ENCODE measurements at regions of chr1 and their contacts with region 1.

Region 1: DNA sequence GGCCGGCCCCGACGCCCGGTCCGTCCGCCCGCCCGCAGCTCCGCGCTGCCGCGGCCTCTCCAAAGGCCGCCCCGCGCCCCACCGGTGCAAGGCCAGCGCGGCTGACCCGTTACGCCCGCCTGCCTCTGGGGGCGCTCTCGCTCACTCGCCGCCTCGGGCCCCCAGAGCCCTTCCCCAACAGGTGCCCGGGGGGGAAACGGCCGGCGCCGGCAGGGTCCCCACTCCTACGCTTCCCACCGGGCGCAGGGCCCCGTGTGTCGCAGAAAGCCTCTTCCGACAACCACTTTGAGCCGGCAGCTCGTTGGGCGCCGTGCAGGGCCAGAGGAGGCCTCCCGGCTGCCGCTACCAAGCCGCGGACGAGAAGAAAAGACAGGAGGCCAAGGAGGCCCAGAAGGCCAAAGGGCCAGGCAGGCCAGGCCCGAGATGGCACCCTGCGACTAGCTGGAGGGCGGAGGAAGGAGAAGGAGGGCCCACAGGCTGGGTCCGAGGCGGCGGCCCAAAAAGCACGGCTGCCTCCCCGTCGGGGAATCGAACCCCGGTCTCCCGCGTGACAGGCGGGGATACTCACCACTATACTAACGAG is 64.9 kb upstream of the FCGR2A start:
- DNase-seq: peak; percentile 60 to 74 (median 67)
- H3K4me3 ChIP-seq: peak overlapping the region; percentile 38 to 83 (median 72)
- H3K27ac ChIP-seq: no peak overlapping the region
- H3K4me1 ChIP-seq: peaks cover 0 to 11% (median 6%) of the 10 kb centered on the region in 4 experiments
- H3K27me3 ChIP-seq: peaks cover 12 to 44% (median 25%) of the 10 kb centered on the region in 5 experiments

Region 2: DNA sequence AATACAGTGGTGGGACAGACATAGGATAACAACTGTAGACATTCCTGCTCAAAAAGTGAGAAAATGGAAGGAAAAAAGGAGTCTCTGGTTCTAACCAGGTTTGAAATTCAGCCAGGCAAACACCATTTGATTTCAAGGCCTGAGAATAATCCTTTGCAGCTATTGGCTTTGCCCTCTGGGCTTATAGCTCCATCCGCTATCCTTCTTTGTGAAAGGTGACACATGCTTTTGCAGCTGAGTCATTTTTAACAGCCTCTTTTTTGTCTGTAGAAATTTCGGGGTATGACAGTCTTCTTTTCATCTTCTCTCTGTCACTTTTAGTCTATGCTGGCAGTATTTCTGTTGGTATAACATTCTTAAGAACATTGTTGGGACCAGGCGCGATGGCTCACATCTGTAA is 110.1 kb before region 1 on chr1:
- CTCF ChIA-PET with region 1: no interaction called
- POLR2A ChIA-PET with region 1: no interaction called
- DNase-seq: no peak
- H3K4me3 ChIP-seq: no peak overlapping the region
- H3K27ac ChIP-seq: no peak overlapping the region
- H3K4me1 ChIP-seq: no peaks in the 10 kb centered on the region
- H3K27me3 ChIP-seq: no peaks in the 10 kb centered on the region

Region 3: DNA sequence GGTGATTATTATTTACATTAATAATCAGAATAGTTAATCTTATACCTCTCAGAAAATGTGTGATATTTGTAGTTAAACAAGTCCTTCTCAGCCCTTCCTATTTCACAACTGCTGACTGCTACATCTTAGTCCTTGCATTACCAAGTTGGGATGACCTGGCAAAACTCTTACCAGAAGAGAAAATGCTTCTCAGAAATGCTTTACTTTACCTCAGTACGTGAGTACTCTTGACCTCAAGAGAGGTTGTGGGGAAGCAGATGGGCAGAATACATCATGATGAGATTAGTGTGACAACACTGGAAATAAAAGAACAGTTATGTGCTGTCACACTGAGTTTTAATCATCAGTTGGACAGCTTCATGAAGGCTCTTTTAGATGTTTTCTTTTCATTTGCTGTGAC is 88.9 kb before region 1 on chr1:
- CTCF ChIA-PET with region 1: no interaction called
- POLR2A ChIA-PET with region 1: no interaction called
- DNase-seq: peak in 2 of 3 donors; percentile 52
- H3K4me3 ChIP-seq: no peak overlapping the region
- H3K27ac ChIP-seq: no peak overlapping the region
- H3K4me1 ChIP-seq: peaks cover 0 to 14% (median 0%) of the 10 kb centered on the region in 4 experiments
- H3K27me3 ChIP-seq: no peaks in the 10 kb centered on the region

Region 4: GRCh38 chr1:161374373-161374772 is 66.0 kb before region 1 on chr1:
- CTCF ChIA-PET with region 1: no interaction called
- POLR2A ChIA-PET with region 1: no interaction called
- DNase-seq: peak; percentile 33 to 51 (median 49)
- H3K4me3 ChIP-seq: no peak overlapping the region
- H3K27ac ChIP-seq: no peak overlapping the region
- H3K4me1 ChIP-seq: peaks cover 0 to 4% (median 0%) of the 10 kb centered on the region in 4 experiments
- H3K27me3 ChIP-seq: no peaks in the 10 kb centered on the region

Region 5: GRCh38 chr1:161399257-161399998 is 41.0 kb before region 1 on chr1:
- CTCF ChIA-PET with region 1: interaction called, 14 read pairs
- POLR2A ChIA-PET with region 1: no interaction called
- DNase-seq: peak; percentile 90 to 94 (median 93)
- H3K4me3 ChIP-seq: peak overlapping the region; percentile 76 to 100 (median 89)
- H3K27ac ChIP-seq: peak overlapping the region; percentile 98 to 99
- H3K4me1 ChIP-seq: peaks cover 3 to 15% (median 9%) of the 10 kb centered on the region in 4 experiments
- H3K27me3 ChIP-seq: peaks cover 0 to 6% (median 0%) of the 10 kb centered on the region in 5 experiments

Region 6: DNA sequence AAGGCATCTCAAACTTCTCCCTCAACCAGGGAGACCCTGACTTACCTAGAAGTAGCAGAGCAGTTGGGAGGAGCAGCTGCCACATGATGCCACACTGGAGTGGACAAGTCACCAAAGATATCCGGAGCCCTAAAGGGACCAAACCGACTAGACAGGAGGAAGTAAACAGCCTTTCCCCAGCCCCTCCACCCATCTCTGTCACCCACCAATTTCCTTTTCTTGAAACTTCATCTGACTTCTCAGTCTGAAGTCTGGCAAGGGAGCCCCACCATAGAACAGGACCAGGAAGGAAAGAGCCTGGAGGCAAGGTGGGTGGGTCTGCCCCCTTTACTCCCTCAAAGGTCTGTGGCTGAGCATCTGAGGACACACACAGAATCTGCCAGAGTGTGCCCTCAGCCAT is 109.2 kb after region 1 on chr1 and contains the start of gene FCGR3A:
- CTCF ChIA-PET with region 1: no interaction called
- POLR2A ChIA-PET with region 1: no interaction called
- DNase-seq: no peak
- H3K4me3 ChIP-seq: no peak within 1 kb of the TSS
- H3K27ac ChIP-seq: no peak within 1 kb of the TSS
- H3K4me1 ChIP-seq: no peaks in the 10 kb centered on the region
- H3K27me3 ChIP-seq: no peaks in the 10 kb centered on the region

Measured in common myeloid progenitor, CD34-positive (primary cell).